Activated naive CD4-positive, alpha-beta T cell treated with anti-CD3 and anti-CD28 coated beads for 36 hours (primary cell): ENCODE measurements at regions of chr10 and their contacts with region 1.

Region 1: DNA sequence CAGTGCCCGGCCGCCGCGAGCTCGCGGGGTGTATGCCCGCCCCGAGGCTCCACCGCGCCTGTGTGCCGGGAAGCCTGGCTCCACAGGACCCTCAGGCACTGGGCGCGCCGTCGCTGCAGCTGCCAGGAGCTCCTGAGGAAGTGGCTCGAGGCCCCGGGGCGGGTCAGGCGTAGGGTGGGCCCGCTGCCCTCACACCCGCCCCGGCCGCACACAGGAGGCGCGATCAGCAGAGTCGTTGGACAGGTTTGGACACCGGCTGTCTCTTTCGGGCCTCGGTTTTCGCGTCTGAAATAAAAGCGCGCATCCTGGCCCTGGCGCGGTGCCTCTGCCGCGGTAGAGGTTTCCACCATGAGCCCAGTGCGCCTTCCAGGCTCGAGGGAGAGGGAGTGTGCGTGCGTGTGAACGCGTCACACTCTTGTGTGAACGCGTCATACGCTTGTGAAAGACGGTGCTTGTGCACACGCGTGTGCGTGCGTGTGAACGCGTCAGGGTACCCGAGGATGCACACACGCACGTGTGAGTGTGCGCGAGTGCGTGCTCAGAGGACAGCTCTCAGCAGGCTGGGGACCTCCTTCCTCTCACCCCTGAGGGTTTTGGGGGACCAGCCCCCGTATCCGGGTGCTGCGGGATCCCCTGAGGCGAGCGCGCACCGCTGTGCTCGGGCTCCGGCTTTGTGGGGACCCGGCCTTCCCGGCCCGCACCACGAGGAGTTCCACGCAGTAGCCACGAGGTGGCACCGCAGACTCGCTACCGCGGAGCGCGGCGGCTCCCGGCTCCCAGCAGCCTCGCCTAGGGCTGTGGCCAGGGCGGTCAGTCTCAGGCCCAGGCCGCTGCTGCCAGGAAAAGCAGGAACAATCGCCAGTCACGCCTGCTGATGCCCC is 83.8 kb downstream of the BMS1 start:
- DNase-seq: peak; percentile 65
- H3K4me3 Mint-ChIP-seq: peak overlapping the region; percentile 23
- H3K27ac Mint-ChIP-seq: no peak overlapping the region
- H3K4me1 Mint-ChIP-seq: no peaks in the 10 kb centered on the region
- H3K27me3 Mint-ChIP-seq: peaks cover 27% of the 10 kb centered on the region

Region 2: GRCh38 chr10:42513921-42514320 is 352.4 kb before region 1 on chr10:
- CTCF ChIA-PET with region 1: no interaction called
- intact Hi-C with region 1: no loop called
- DNase-seq: no peak
- H3K4me3 Mint-ChIP-seq: no peak overlapping the region
- H3K27ac Mint-ChIP-seq: no peak overlapping the region
- H3K4me1 Mint-ChIP-seq: peaks cover 2% of the 10 kb centered on the region
- H3K27me3 Mint-ChIP-seq: no peaks in the 10 kb centered on the region

Region 3: DNA sequence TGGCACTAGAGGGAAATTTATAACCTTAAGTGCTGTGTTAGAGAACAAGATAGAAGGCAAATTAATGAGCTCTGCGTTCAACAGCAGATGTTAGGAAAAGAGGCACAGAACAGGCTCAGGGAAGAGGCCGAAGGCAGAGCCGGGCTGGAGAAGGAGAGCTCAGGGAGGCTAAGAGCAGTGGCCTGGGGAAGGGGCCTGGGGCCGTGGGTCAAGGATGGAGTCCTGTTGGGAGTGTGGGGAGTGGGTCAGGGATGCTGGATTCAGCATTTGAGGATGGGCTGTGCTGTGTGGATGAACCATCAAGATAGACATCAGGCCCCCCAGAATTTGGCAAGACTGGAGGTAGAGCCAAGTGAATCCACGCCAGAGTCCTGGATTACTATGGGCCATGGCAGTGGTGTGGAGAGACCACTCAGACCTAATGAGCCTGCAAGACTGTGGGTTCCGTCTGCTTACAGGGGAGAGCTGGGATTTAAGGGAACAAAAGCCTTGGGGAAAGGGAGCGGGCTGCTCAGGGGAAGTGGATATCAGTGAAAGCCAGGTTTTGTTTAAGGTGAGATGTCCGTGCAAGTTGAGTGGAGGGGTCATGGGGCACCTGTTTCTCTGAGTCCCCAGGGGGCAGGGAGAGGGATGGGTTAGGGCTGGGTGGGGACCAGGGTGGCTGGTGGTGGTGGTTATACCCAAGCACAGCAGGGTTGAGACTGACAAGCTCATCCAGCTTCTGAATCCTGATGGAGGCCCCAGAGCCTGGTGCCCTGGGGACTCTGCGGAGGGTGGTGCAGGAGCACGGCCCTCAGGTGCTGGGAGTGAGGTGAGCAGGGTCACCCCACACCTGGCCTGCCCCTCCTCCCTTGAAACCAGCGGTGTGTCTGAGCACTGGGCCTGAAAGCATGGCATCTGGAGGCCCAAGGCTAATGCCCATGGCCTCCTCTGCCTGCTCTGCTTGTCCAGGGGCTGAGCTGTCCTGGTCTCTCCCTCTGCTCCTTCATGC is 17.9 kb after region 1 on chr10:
- CTCF ChIA-PET with region 1: no interaction called
- intact Hi-C with region 1: no loop called
- DNase-seq: no peak
- H3K4me3 Mint-ChIP-seq: no peak overlapping the region
- H3K27ac Mint-ChIP-seq: no peak overlapping the region
- H3K4me1 Mint-ChIP-seq: no peaks in the 10 kb centered on the region
- H3K27me3 Mint-ChIP-seq: no peaks in the 10 kb centered on the region

Region 4: DNA sequence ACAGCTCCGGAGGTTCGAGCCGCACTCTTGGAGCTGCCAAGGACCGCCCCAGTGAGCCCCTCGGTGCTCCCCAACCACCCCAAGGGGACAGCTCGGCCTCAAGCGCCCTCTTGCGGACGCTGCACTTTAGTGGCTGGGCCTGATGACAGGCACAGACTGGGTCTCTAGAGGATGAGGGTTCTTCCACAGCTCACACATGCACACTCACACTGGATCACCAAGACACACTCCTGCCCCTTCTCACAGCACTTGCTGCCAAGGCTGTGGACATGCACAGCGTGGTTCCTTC is 212.6 kb after region 1 on chr10:
- CTCF ChIA-PET with region 1: interaction called, 3 read pairs
- intact Hi-C with region 1: loop called (anchors 2 kb)
- DNase-seq: peak; percentile 49
- H3K4me3 Mint-ChIP-seq: no peak overlapping the region
- H3K27ac Mint-ChIP-seq: no peak overlapping the region
- H3K4me1 Mint-ChIP-seq: peaks cover 3% of the 10 kb centered on the region
- H3K27me3 Mint-ChIP-seq: peaks cover 32% of the 10 kb centered on the region

Region 5: DNA sequence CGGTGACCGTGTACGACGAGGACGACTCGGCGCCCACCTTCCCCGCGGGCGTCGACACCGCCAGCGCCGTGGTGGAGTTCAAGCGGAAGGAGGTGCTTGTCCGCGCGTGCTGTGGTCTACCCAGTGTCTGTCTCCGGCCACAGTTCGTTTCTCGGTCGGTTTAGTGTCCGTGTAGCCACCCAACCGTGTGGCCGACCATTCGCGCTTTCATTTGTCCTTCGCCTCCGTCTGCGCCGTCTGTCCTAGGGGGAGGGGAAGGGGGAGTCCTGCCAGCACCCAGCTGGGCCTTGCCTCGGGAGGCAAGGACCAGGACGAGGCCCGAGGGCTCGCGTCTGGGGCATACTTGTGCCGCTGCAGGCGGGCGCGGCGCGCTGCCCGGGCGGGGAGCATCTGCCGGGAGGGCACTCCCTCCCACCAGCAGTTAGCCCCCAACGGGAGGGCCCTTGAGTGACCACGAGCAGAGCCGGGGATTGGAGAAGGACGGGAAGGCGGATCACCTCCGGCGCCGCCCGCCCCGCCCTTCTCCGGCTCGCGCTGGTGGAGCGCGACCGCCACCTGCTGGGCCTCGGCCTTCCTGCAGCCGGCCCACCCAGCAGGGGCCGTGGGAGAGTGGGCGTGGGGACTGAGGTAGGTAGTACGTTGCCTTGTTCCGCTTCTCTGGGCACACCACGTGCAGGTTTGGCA is 238.9 kb after region 1 on chr10:
- CTCF ChIA-PET with region 1: interaction called, 5 read pairs
- intact Hi-C with region 1: loop called (anchors 1 kb)
- DNase-seq: peak; percentile 74
- H3K4me3 Mint-ChIP-seq: peak overlapping the region; percentile 63
- H3K27ac Mint-ChIP-seq: no peak overlapping the region
- H3K4me1 Mint-ChIP-seq: peaks cover 4% of the 10 kb centered on the region
- H3K27me3 Mint-ChIP-seq: peaks cover 13% of the 10 kb centered on the region

Region 6: DNA sequence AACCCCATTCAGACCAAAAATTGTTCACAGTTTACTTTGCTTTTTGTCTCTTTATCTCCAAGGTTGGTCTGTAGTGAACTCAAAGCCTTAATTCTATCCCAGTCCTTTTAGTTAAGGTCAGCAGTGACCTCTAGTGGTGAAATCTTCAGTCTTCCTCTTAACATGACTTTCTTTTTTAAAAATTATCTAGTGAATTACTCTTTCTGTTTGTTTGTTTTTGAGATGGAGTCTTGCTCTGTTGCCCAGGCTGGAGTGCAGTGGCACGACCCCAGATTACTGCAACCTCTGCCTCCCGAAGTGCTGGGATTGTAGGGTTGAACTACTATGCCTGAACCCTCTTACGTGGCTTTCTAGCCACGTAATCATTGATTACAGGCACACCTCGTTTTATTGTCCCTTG is 595.6 kb after region 1 on chr10:
- CTCF ChIA-PET with region 1: no interaction called
- intact Hi-C with region 1: loop called (anchors 2 kb)
- DNase-seq: peak; percentile 24
- H3K4me3 Mint-ChIP-seq: no peak overlapping the region
- H3K27ac Mint-ChIP-seq: no peak overlapping the region
- H3K4me1 Mint-ChIP-seq: peaks cover 12% of the 10 kb centered on the region
- H3K27me3 Mint-ChIP-seq: no peaks in the 10 kb centered on the region